Caco-2 (cell line): ENCODE measurements at regions of chr7 and their contacts with region 1.

Region 1: GRCh38 chr7:30379131-30379530 is 94.7 kb downstream of the ZNRF2 start:
- DNase-seq: no peak
- H3K4me3 ChIP-seq: no peak overlapping the region
- H3K4me3 Mint-ChIP-seq: no peak overlapping the region
- H3K27ac Mint-ChIP-seq: no peak overlapping the region
- H3K4me1 ChIP-seq: no peaks in the 10 kb centered on the region
- H3K4me1 Mint-ChIP-seq: no peaks in the 10 kb centered on the region
- H3K27me3 ChIP-seq: no peaks in the 10 kb centered on the region
- H3K27me3 Mint-ChIP-seq: no peaks in the 10 kb centered on the region
- CTCF ChIP-seq: no peak

Region 2: GRCh38 chr7:30469303-30469702 is 90.2 kb after region 1 on chr7:
- CTCF ChIA-PET with region 1: no interaction called
- POLR2A ChIA-PET with region 1: interaction called, 10 read pairs
- intact Hi-C with region 1: no loop called
- DNase-seq: peak; percentile 50 to 53
- H3K4me3 ChIP-seq: no peak overlapping the region
- H3K4me3 Mint-ChIP-seq: no peak overlapping the region
- H3K27ac Mint-ChIP-seq: no peak overlapping the region
- H3K4me1 ChIP-seq: no peaks in the 10 kb centered on the region
- H3K4me1 Mint-ChIP-seq: peaks cover 7% of the 10 kb centered on the region
- H3K27me3 ChIP-seq: no peaks in the 10 kb centered on the region
- H3K27me3 Mint-ChIP-seq: no peaks in the 10 kb centered on the region
- CTCF ChIP-seq: peak; percentile 9 to 39